ENCODE measurements at regions of chrX and their contacts with region 1.

Region 1: GRCh38 chrX:107776649-107777535 is 641 bp upstream of the NCBP2L start:
- DNase-seq: peak; percentile 78 to 91 (median 79)
- ATAC-seq: peak; percentile 73 to 80
- H3K4me3 ChIP-seq: peak overlapping the region; percentile 60
- H3K27ac ChIP-seq: peak overlapping the region; percentile 80
- H3K4me1 ChIP-seq: no peaks in the 10 kb centered on the region
- H3K27me3 ChIP-seq: no peaks in the 10 kb centered on the region

Region 2: GRCh38 chrX:107654872-107655761 is 121.8 kb before region 1 on chrX:
- intact Hi-C with region 1: loop called in 3 of 4 experiments (anchors 2 to 5 kb)
- DNase-seq: peak; percentile 74 to 85 (median 80)
- ATAC-seq: peak; percentile 90
- H3K4me3 ChIP-seq: no peak overlapping the region
- H3K27ac ChIP-seq: peak overlapping the region; percentile 1
- H3K4me1 ChIP-seq: no peaks in the 10 kb centered on the region
- H3K27me3 ChIP-seq: no peaks in the 10 kb centered on the region

Region 3: DNA sequence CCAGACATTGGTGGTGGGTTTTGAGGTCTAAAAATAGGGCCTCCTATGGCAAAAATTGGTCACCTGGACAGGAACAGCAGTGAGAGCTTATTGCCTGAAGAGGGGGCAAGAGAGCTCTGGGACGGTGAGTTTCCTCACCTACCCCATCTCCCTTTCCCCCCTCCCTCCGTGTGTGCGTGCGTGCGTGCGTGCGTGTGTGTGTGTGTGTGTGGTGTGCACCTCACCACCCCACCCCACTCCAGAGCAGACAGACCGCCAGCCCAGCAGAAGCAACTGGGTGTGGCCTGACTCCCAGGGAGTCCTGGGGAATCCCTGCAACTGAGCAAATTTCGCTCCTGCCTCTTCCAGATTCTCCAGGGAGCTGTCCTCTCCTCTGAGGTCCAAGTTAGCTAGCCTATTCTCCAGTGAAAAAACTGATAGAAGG is 103.9 kb before region 1 on chrX:
- intact Hi-C with region 1: loop called in 2 of 4 experiments (anchors 5 kb)
- DNase-seq: peak; percentile 74 to 90 (median 82)
- ATAC-seq: peak; percentile 38 to 52
- H3K4me3 ChIP-seq: no peak overlapping the region
- H3K27ac ChIP-seq: peak overlapping the region; percentile 100
- H3K4me1 ChIP-seq: peaks cover 8% of the 10 kb centered on the region
- H3K27me3 ChIP-seq: no peaks in the 10 kb centered on the region

Region 4: DNA sequence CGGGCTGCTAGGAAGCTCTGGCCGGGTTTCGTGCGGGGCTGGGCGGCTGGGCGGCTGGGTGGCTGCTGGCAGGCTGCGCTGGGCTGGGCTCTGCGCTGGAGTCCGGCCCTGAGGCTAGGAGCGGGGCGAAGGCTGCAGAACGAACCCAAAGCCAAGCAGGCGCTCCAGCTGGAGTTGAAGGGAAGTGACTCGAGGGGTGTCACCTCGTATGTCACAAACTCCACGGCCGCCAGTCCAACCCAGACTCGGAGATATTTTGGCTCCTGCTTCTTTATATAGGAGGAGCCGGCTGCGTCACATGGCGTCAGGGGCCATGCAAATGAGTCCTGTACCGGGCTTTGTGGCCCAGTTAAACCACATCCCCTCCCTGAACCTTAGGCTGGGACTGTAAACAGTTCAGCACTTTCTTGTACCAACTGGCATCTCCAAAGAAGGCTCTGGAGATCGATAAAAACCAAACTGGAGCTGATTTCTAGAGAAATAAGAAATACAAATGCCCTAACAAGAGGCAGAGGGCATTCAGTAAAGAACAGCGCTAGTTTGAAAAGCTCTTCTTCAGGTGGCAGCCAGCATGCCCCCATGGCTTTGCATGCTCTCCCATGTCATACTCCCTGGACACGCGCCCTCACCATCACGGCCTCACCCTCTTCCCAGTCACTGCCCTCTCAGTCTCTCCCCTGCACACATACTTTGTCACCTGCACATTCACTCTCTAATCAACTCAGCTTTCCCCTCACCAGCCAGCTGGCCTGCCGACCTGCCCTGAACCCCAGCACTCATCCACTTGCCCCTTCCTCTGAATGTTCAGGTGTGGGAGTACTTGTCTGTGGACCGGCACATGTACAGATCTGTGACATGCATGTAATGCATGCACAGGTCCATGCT is 59.8 kb before region 1 on chrX:
- intact Hi-C with region 1: loop called in 3 of 4 experiments (anchors 5 kb)
- DNase-seq: peak; percentile 86 to 94 (median 92)
- ATAC-seq: peak; percentile 86 to 87
- H3K4me3 ChIP-seq: peak overlapping the region; percentile 94
- H3K27ac ChIP-seq: peak overlapping the region; percentile 99
- H3K4me1 ChIP-seq: peaks cover 12% of the 10 kb centered on the region
- H3K27me3 ChIP-seq: no peaks in the 10 kb centered on the region

Region 5: DNA sequence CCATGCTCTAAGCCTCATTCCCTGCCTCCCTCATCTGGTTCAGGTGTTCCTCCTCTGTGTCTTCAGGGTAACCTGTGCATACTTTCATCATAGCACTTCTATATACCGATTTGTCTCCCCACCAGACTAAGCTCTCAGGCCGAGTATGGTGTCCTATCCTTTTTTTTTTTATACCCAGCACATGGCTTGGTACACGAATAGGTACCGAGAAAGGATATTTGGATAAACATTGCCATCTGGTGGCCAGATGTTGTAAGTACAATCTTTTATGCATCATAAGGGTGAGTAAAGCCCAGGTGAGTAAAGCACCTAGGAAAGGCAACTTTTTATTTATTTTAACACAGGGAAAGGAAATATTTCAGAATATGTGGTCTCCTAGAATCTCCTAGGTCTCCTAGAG is 117.1 kb after region 1 on chrX:
- intact Hi-C with region 1: loop called in 1 of 4 experiments (anchors 5 kb)
- DNase-seq: no peak
- ATAC-seq: peak in 1 of 2 donors; percentile 52
- H3K4me3 ChIP-seq: no peak overlapping the region
- H3K27ac ChIP-seq: no peak overlapping the region
- H3K4me1 ChIP-seq: no peaks in the 10 kb centered on the region
- H3K27me3 ChIP-seq: no peaks in the 10 kb centered on the region

Measured in right cardiac atrium (tissue), 5 donors.